ENCODE measurements at regions of chr6 and their contacts with region 1.

Region 1: DNA sequence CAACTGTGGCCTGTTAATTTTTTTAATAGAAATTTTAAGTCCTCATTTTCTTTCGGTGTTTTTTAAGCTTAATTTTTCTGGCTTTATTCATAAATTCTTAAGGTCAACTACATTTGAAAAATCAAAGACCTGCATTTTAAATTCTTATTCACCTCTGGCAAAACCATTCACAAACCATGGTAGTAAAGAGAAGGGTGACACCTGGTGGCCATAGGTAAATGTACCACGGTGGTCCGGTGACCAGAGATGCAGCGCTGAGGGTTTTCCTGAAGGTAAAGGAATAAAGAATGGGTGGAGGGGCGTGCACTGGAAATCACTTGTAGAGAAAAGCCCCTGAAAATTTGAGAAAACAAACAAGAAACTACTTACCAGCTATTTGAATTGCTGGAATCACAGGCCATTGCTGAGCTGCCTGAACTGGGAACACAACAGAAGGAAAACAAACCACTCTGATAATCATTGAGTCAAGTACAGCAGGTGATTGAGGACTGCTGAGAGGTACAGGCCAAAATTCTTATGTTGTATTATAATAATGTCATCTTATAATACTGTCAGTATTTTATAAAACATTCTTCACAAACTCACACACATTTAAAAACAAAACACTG is 10.1 kb downstream of the HFE start:
- DNase-seq: no peak
- H3K4me3 ChIP-seq: no peak overlapping the region
- H3K27ac ChIP-seq: no peak overlapping the region
- H3K4me1 ChIP-seq: no peaks in the 10 kb centered on the region
- H3K27me3 ChIP-seq: no peaks in the 10 kb centered on the region
- CTCF ChIP-seq: peak; percentile 87

Region 2: DNA sequence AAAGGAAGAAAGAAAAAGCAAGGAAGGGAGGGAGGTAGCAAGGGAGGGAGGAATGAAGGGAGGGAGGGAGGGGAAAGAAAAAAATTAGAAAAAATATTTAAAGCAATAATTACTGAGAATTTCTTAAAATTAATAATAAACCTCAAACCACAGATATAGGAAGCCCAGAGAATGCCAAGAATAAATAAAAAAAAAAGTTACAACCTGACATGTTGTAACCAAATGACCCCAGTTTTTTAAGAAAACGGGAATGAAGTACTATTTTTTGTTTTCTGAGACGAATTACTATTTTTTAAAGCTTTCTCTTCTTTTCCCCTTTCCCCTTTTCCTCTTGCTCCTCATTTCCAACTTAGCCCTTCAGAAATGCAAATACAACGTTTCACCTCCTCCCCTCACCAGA is 282.2 kb before region 1 on chr6:
- intact Hi-C with region 1: no loop called
- DNase-seq: no peak
- H3K4me3 ChIP-seq: no peak overlapping the region
- H3K27ac ChIP-seq: no peak overlapping the region
- H3K4me1 ChIP-seq: no peaks in the 10 kb centered on the region
- H3K27me3 ChIP-seq: peaks cover 3% of the 10 kb centered on the region
- CTCF ChIP-seq: no peak

Region 3: GRCh38 chr6:26065952-26066380 is 31.4 kb before region 1 on chr6:
- intact Hi-C with region 1: loop called (anchors 1 kb)
- DNase-seq: no peak
- H3K4me3 ChIP-seq: no peak overlapping the region
- H3K27ac ChIP-seq: no peak overlapping the region
- H3K4me1 ChIP-seq: peaks cover 1% of the 10 kb centered on the region
- H3K27me3 ChIP-seq: no peaks in the 10 kb centered on the region
- CTCF ChIP-seq: peak; percentile 86

Measured in left ventricle myocardium inferior (tissue), 1 donor.